K562 (cell line): ENCODE measurements at regions of chr9 and their contacts with region 1.

Region 1: DNA sequence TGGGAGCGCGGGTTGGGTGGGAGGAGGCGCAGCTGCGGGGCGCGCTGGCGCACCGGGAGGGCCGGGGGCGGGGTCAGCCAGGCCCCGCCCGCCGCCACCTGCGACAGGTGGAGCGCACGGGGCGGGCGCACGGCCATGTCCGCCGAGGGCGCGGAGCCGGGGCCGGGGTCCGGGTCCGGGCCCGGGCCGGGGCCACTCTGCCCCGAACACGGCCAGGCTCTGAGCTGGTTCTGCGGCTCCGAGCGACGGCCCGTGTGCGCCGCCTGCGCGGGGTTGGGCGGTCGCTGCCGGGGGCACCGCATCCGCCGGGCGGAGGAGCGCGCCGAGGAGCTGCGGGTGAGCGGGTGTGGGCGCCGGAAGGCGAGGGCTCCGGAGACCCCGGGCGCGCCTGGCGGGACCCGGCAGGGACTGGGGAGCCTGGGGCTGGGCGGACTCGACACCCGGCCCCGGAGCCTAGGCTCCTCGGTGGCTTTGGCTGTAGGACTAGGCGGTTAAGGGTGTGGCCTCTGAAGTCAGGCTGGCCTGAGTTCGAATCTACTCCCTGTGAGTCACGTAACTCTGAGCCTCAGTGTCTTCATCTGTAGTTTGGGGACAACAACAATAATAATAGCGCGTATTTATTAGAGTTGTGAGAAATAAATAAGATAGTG is at the start of gene BSPRY:
- DNase-seq: peak in 2 of 4 experiments; percentile 54 to 55
- ATAC-seq: peak; percentile 50
- H3K4me3 ChIP-seq: peak within 1 kb of the TSS; percentile 29
- H3K27ac ChIP-seq: no peak within 1 kb of the TSS
- H3K4me1 ChIP-seq: peaks cover 3 to 10% of the 10 kb centered on the region in 2 experiments; a peak in 3 of 5 replicates
- H3K27me3 ChIP-seq: peaks cover 2 to 4% of the 10 kb centered on the region in 2 experiments; a peak in 2 of 5 replicates
- CTCF ChIP-seq: no peak
- EP300 ChIP-seq: no peak
- POLR2A ChIP-seq: no peak
- RAD21 ChIP-seq: no peak
- polyA plus RNA-seq, gene BSPRY: 0.07 TPM

Region 2: GRCh38 chr9:113361304-113362018 is 11.9 kb after region 1 on chr9:
- CTCF ChIA-PET with region 1: no interaction called
- POLR2A ChIA-PET with region 1: interaction called, 22 read pairs
- in situ Hi-C with region 1: no loop called
- intact Hi-C with region 1: no loop called
- DNase-seq: peak in 1 of 4 experiments; percentile 58
- ATAC-seq: peak; percentile 56
- H3K4me3 ChIP-seq: no peak overlapping the region
- H3K27ac ChIP-seq: no peak overlapping the region
- H3K4me1 ChIP-seq: peaks cover 20 to 21% of the 10 kb centered on the region in 2 experiments
- H3K27me3 ChIP-seq: 0 out of 5 replicates have a peak, but pooled peaks cover 0 to 4% of the 10 kb centered on the region in 2 experiments
- CTCF ChIP-seq: no peak
- EP300 ChIP-seq: no peak
- POLR2A ChIP-seq: no peak
- RAD21 ChIP-seq: no peak